ENCODE measurements at regions of chr2 and their contacts with region 1.

Region 1: DNA sequence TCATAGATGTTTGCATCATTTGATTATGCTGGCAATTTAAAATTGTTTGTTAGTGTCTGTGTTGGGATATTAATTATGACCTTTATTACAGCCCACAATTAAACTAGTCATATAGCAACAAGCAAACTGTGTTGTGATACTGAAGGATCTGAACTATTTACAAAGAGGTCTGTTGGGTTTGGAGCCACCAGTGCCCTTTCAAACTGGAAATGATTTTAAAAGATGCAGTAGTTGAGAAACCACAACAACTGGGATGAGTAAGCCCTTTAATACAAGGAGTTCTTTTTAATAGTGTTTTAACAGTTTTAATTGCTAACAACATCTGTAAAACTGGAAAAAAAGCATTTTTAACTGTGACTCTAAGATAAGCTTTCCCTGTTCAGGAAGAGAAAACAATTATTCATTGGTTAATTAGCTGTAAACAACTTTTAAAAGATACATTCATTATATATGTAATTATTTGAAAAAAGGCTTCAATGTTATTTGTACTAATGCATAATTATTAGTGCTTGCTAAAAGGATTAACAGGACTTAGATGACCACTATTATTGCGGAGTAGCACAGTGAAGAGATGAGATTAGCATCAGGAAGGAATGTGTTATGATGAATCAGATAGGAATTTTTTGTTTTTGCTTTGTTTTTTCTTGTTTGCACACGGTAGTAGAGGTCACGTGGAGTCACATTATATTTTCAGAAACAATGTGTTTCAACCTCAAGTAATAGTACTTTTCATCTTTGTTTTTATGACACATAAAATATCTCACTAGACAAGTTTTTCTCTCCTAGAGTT is 392.6 kb upstream of the FANCL start:
- DNase-seq: peak; percentile 91
- H3K4me3 ChIP-seq: no peak overlapping the region
- H3K27ac ChIP-seq: peak overlapping the region; percentile 96
- H3K4me1 ChIP-seq: peaks cover 45% of the 10 kb centered on the region
- H3K27me3 ChIP-seq: no peaks in the 10 kb centered on the region
- CTCF ChIP-seq: no peak
- POLR2A ChIP-seq: peak; percentile 35

Region 2: GRCh38 chr2:58240670-58241545 is 392.9 kb before region 1 on chr2 and contains the start of gene FANCL:
- CTCF ChIA-PET with region 1: no interaction called
- POLR2A ChIA-PET with region 1: no interaction called
- dilution Hi-C with region 1: no loop called
- intact Hi-C with region 1: loop called (anchors 10 kb)
- DNase-seq: peak; percentile 87
- H3K4me3 ChIP-seq: peak within 1 kb of the TSS; percentile 35 to 92 (median 73)
- H3K27ac ChIP-seq: peak within 1 kb of the TSS; percentile 27
- H3K4me1 ChIP-seq: peaks cover 16% of the 10 kb centered on the region
- H3K27me3 ChIP-seq: peaks cover 0 to 2% of the 10 kb centered on the region in 2 experiments
- CTCF ChIP-seq: no peak
- POLR2A ChIP-seq: peak; percentile 70
- total RNA-seq, gene FANCL: 15.8 and 16.7 TPM in 2 replicates

Region 3: GRCh38 chr2:58594175-58594574 is 39.6 kb before region 1 on chr2:
- CTCF ChIA-PET with region 1: interaction called, 3 read pairs
- POLR2A ChIA-PET with region 1: no interaction called
- dilution Hi-C with region 1: no loop called
- intact Hi-C with region 1: loop called (anchors 2 kb)
- DNase-seq: no peak
- H3K4me3 ChIP-seq: no peak overlapping the region
- H3K27ac ChIP-seq: no peak overlapping the region
- H3K4me1 ChIP-seq: no peaks in the 10 kb centered on the region
- H3K27me3 ChIP-seq: no peaks in the 10 kb centered on the region
- CTCF ChIP-seq: peak; percentile 29 to 31
- POLR2A ChIP-seq: no peak

Region 4: GRCh38 chr2:58649756-58650155 is 16.0 kb after region 1 on chr2:
- CTCF ChIA-PET with region 1: interaction called, 13 read pairs
- POLR2A ChIA-PET with region 1: no interaction called
- dilution Hi-C with region 1: no loop called
- intact Hi-C with region 1: no loop called
- DNase-seq: no peak
- H3K4me3 ChIP-seq: no peak overlapping the region
- H3K27ac ChIP-seq: no peak overlapping the region
- H3K4me1 ChIP-seq: peaks cover 6% of the 10 kb centered on the region
- H3K27me3 ChIP-seq: no peaks in the 10 kb centered on the region
- CTCF ChIP-seq: no peak
- POLR2A ChIP-seq: no peak

Region 5: GRCh38 chr2:59076079-59076619 is 442.4 kb after region 1 on chr2:
- CTCF ChIA-PET with region 1: no interaction called
- POLR2A ChIA-PET with region 1: no interaction called
- dilution Hi-C with region 1: no loop called
- intact Hi-C with region 1: no loop called
- DNase-seq: no peak
- H3K4me3 ChIP-seq: no peak overlapping the region
- H3K27ac ChIP-seq: no peak overlapping the region
- H3K4me1 ChIP-seq: no peaks in the 10 kb centered on the region
- H3K27me3 ChIP-seq: no peaks in the 10 kb centered on the region
- CTCF ChIP-seq: no peak
- POLR2A ChIP-seq: no peak

Measured in endothelial cell of umbilical vein (primary cell).